ENCODE measurements at regions of chr17 and their contacts with region 1.

Region 1: GRCh38 chr17:58517734-58518609 is 3.5 kb upstream of the MTMR4 start:
- DNase-seq: peak; percentile 100
- H3K4me3 ChIP-seq: peak overlapping the region; percentile 29 to 73 (median 56)
- H3K27ac ChIP-seq: peak overlapping the region; percentile 81
- H3K4me1 ChIP-seq: peaks cover 18% of the 10 kb centered on the region
- H3K27me3 ChIP-seq: no peaks in the 10 kb centered on the region
- CTCF ChIP-seq: no peak
- POLR2A ChIP-seq: peak; percentile 71

Region 2: DNA sequence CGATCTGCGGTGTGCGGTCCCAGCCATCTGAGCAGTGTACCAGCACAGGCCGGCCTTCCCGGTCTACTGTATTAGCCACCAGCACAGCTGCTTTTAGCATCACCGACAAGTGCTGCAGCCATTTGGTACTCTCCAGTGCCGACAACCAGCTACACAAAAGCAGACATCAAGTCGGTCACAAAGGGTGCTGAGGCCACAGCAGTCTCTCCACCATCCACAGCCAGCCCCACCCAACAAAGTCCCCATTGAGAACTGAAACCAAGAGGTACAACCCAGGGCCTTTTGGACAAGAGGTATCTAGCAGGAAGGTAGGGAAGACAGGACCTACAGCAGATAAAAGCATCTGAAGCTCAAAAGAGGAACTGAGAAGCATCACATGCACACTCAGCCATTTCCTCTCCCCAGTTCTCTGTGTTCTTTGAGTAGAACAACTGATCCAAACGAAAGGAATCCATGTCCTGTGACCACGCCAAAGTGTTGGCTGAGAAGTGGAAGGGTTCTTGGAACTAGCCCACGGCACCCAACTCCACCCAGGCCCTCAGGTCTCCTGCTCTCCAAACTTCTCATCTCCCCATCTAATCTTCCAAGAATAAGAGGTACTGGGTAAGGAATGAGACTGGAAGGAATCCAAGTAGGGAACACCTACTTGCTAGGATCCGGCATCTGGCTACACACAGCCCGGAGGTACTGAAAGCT is 13.0 kb before region 1 on chr17:
- CTCF ChIA-PET with region 1: no interaction called
- POLR2A ChIA-PET with region 1: no interaction called
- dilution Hi-C with region 1: no loop called
- intact Hi-C with region 1: no loop called
- DNase-seq: no peak
- H3K4me3 ChIP-seq: no peak overlapping the region
- H3K27ac ChIP-seq: no peak overlapping the region
- H3K4me1 ChIP-seq: no peaks in the 10 kb centered on the region
- H3K27me3 ChIP-seq: no peaks in the 10 kb centered on the region
- CTCF ChIP-seq: no peak
- POLR2A ChIP-seq: no peak

Region 3: DNA sequence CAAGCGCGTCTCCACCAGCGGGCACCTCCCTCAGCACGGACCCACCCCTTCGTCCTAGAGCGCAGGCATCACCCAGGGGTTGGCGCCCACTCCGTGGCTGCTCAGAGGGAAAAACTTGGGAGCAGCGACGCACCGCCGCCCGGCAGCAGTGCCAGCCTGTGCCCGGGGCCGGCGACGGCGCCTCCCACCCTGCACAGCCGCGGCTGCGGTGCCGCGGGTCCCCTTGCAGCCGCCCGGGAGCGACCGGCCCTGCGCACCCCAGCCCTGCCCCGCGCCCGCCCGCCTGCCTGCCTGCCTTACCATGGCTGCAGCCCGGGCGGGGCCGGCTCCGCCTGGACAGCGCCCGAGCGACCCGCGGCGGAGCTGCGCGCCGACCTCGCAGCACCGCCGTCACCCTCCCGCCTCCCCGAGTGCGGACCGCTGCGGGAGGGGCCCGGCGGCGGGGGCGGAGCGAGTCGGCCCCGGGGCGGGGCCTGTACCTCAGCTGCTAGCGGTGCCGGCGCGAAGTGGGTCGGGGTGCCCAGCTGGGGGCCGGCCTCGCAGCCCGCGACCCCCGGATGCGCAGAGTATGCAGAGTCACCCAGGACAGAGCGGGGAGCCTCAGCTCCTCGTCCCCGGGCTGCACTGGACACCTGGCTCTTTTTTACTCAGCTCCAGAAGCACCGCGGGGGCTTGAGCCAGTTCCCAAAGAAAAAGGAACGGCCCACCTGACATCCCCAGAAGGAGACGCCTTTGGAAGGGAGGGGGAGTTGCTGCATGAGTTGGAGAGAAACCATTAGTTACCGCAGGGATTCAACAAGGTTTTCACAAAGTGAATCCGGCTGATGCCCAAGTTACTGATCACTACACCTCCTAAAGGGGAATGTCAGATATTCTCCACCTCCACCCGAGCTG is 13.9 kb after region 1 on chr17:
- CTCF ChIA-PET with region 1: interaction called, 18 read pairs
- POLR2A ChIA-PET with region 1: no interaction called
- dilution Hi-C with region 1: no loop called
- intact Hi-C with region 1: no loop called
- DNase-seq: peak; percentile 56
- H3K4me3 ChIP-seq: peak overlapping the region in 2 of 3 experiments; percentile 39 to 44
- H3K27ac ChIP-seq: no peak overlapping the region
- H3K4me1 ChIP-seq: peaks cover 15% of the 10 kb centered on the region
- H3K27me3 ChIP-seq: peaks cover 3 to 5% of the 10 kb centered on the region in 2 experiments
- CTCF ChIP-seq: no peak
- POLR2A ChIP-seq: no peak

Region 4: GRCh38 chr17:58631523-58632323 is 113.8 kb after region 1 on chr17:
- CTCF ChIA-PET with region 1: interaction called, 30 read pairs
- POLR2A ChIA-PET with region 1: interaction called, 46 read pairs
- dilution Hi-C with region 1: no loop called
- intact Hi-C with region 1: loop called (anchors 1 kb)
- DNase-seq: peak; percentile 98
- H3K4me3 ChIP-seq: peak overlapping the region in 2 of 3 experiments; percentile 23 to 52
- H3K27ac ChIP-seq: peak overlapping the region; percentile 97
- H3K4me1 ChIP-seq: peaks cover 11% of the 10 kb centered on the region
- H3K27me3 ChIP-seq: no peaks in the 10 kb centered on the region
- CTCF ChIP-seq: peak in 1 of 2 donors; percentile 32
- POLR2A ChIP-seq: peak; percentile 100

Region 5: DNA sequence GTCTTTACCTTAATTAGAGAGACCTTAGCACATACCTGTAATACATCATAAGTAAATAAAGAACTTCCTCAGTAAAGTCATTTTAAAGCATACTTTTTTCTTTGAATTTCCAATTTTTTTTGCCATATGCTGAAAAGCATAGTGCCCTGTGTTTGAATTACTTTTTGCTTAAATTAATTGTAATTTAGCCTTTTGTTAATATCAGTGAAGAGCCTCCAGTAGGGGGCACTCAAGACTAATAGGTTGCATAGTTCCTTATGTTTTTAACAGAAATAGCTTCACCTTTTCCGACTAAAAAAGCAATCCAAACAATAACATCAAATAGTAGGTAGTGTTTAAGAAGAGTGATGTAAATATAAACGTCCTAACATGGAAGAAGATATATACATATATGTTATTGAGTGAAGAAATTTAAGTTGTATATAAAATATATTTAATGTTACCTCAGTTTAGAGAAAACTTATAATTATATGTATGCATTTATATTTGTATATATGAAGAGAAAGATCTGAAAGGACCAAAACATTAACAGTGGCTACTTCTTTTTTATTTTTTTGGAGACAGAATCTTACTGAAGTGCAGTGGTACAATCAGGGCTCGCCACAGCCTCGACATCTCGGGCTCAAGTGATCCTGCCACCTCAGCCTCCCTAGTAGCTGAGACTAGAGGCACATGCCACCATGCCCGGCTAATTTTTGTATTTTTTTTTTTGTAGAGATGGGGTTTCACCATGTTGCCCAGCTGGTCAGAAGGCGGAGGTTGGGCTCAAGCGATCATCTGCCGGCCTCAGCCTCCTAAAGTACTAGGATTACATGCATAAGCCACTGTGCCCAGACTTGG is 193.2 kb after region 1 on chr17:
- CTCF ChIA-PET with region 1: interaction called, 15 read pairs
- POLR2A ChIA-PET with region 1: no interaction called
- dilution Hi-C with region 1: no loop called
- intact Hi-C with region 1: no loop called
- DNase-seq: peak; percentile 73
- H3K4me3 ChIP-seq: no peak overlapping the region
- H3K27ac ChIP-seq: no peak overlapping the region
- H3K4me1 ChIP-seq: no peaks in the 10 kb centered on the region
- H3K27me3 ChIP-seq: no peaks in the 10 kb centered on the region
- CTCF ChIP-seq: peak; percentile 47 to 52
- POLR2A ChIP-seq: no peak

Region 6: DNA sequence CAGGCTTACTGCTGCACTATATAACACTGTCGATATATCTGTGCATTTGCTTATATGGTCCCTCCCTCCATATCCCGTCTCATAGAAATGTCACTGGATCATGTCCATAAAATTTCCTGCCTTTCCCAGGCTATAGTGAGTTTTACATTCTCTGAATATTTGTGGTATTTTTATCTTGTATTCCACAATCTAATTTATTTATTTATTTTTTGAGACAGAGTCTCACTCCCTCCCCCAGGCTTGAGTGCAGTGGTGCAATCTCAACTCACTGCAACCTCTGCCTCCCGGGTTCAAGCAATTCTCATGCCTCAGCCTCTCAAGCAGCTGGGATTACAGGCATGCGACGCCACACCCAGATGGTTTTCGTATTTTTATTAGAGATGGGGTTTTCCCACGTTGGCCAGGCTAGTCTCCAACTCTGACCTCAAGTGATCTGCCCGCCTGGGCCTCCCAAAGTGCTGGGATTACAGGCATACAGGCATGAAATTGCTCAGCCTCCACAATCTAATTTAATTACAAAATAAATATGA is 575.8 kb after region 1 on chr17:
- CTCF ChIA-PET with region 1: no interaction called
- POLR2A ChIA-PET with region 1: no interaction called
- dilution Hi-C with region 1: no loop called
- intact Hi-C with region 1: loop called (anchors 5 kb)
- DNase-seq: peak; percentile 93
- H3K4me3 ChIP-seq: peak overlapping the region in 1 of 3 experiments; percentile 25
- H3K27ac ChIP-seq: peak overlapping the region; percentile 83
- H3K4me1 ChIP-seq: peaks cover 27% of the 10 kb centered on the region
- H3K27me3 ChIP-seq: no peaks in the 10 kb centered on the region
- CTCF ChIP-seq: no peak
- POLR2A ChIP-seq: no peak

Region 7: DNA sequence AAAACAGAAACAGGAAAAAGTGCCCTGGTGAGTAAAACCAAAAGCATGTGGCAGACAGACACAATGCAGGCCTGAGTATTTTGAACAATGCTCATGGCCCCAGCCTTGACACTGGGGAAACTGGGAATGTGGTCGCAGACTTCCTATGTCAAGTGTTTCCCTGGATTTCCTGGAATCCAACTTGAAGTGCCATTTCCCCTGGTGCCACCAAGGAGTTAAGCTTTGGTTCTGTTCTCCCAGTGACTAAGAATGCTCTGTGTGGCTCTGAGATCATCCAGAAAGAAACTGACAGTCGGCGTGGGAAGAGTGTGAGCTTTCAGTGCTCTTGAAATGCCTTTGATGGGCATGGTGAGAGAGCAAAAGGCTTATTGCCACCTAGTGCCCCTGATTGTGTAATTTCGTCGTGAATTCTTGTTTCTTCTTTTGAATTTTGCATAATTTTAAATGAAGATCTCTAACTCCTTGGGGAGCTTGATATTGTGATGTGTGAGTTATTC is 909.5 kb after region 1 on chr17:
- CTCF ChIA-PET with region 1: no interaction called
- POLR2A ChIA-PET with region 1: no interaction called
- dilution Hi-C with region 1: no loop called
- intact Hi-C with region 1: loop called (anchors 5 kb)
- DNase-seq: peak; percentile 98
- H3K4me3 ChIP-seq: peak overlapping the region in 1 of 3 experiments; percentile 2
- H3K27ac ChIP-seq: peak overlapping the region; percentile 91
- H3K4me1 ChIP-seq: peaks cover 68% of the 10 kb centered on the region
- H3K27me3 ChIP-seq: no peaks in the 10 kb centered on the region
- CTCF ChIP-seq: no peak
- POLR2A ChIP-seq: peak; percentile 59